Head of caudate nucleus (tissue), 42 donors: ENCODE measurements at regions of chr9 and their contacts with region 1.

Region 1: DNA sequence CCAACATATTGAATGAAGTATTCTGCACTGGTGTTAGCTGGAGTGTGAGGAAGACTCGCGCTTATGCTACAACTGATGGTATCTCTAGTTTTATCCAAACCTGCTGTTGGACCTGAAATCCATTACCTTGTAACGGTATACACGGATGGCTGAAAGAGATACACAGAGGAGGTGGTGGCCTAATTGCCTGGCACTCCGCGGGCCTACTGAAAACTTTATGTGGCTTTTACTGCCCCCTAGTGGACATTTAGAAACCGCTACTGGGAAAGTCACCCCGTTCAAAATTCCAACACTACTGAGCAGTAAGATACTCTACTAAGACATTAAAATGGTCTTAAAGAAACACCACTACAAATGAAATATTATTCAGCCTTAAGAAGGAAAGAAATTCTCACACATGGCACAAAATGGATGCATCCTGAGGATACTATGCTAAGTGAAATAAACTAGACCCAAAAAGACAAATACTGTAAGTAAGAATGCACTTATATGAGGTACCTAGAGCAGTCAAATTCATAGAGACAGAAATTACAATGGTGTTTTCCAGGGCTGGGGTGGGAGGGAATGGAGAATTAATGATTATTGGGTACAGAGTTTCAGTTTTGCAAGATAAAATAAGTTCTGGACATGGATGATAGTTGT is 100.4 kb downstream of the TTLL11 start:
- DNase-seq: peak; percentile 22 to 88 (median 68)

Region 2: DNA sequence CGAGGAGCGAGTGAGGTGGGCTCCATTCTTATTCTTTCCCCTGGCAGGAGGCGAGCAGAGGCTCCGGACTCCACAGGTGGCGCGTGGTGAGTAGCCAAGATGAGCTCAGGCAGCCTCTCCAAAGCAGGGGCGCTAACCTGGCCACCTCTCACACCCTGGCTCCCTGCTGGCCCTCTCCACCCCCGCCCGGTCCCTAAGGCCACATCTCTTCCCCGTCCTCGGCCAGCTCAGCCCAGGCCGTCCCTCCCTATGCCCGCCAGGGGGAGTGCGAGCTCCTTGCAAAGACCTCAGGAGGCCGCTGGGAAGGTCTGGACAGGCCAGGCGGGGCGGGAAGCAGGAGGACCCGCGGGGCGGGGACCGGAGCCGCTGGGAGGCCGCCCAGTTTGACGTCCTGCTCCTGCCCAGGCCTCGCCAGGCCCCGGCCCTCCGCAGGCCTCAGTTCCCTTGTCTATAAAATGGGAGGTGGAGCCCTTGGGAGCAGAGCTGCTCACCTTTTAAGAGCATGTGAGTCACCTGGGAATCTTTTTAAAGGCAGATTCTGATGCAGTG is 446.7 kb before region 1 on chr9:
- intact Hi-C with region 1: loop called (anchors 5 kb)
- DNase-seq: peak; percentile 88 to 97 (median 94)

Region 3: GRCh38 chr9:121686930-121687541 is 305.7 kb before region 1 on chr9:
- intact Hi-C with region 1: loop called (anchors 2 kb)
- DNase-seq: peak in 41 of 42 donors; percentile 72 to 94 (median 86)

Region 4: GRCh38 chr9:121744002-121744686 is 248.5 kb before region 1 on chr9:
- intact Hi-C with region 1: loop called (anchors 10 kb)
- DNase-seq: peak; percentile 59 to 91 (median 78)

Region 5: DNA sequence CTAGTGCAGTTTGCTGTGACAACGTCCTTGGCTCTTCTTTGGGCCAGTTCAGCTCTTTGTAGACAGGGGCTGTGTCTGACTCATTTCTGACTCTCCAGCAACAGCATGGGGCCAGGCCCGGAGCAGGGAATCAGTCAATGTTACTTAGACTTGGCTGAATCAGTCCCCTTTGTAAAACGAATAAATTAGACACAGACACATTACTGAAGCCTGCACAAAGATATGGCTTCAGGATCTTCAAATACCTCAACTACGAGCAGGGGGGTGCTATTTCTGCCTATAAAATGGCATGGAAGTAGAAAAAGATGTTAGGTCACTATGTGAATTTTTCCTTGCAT is 104.3 kb before region 1 on chr9:
- intact Hi-C with region 1: loop called (anchors 10 kb)
- DNase-seq: peak in 7 of 42 donors; percentile 13 to 87 (median 50)

Region 6: GRCh38 chr9:122056484-122056883 is 63.8 kb after region 1 on chr9:
- intact Hi-C with region 1: no loop called
- DNase-seq: no peak